ENCODE measurements at regions of chr3 and their contacts with region 1.

Region 1: GRCh38 chr3:9271903-9272302 is 22.5 kb upstream of the SRGAP3 start:
- DNase-seq: no peak

Region 2: DNA sequence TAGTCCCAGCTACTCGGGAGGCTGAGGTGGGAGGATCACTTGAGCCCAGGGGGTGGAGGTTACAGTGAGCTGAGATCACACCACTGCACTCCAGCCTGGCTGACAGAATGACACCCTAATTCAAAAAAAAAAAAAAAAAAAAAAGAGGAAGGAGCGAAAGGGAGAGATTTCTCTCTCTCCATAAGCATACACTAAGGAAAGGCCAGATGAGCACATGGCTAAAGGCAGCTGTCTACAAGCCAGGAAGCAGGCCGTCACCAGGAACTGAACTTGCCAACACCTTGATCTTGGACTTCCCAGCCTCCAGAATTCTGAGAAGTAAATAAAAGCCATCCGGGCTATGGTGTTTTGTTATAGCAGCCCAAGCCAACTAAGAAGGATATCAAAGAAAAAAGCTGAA is 29.9 kb before region 1 on chr3:
- intact Hi-C with region 1: loop called in 1 of 2 experiments (anchors 1 kb)
- DNase-seq: no peak

Measured in posterior vena cava (tissue), 2 donors.